A549 (cell line): ENCODE measurements at regions of chr5 and their contacts with region 1.

Region 1: DNA sequence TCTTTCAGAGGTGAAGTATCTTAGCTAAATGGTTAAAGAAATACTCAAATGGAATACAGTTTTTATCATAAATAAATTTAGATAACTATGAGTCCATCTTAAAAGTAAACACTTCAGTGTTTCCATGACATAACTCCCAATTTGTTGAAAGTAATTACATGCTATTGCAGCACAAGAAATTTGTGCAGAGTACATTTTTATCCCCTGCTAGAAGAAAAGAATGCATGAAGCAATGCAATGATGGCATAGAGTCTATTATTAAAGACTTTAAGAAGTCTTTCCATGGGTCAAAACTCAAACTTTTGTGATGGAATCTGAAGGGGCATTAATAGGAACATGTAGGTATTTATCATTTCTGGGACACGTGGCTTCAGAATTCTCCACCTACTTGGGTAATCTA is 106.6 kb upstream of the DPYSL3 start:
- DNase-seq: no peak
- ATAC-seq: no peak
- H3K4me3 ChIP-seq: no peak overlapping the region
- H3K27ac ChIP-seq: no peak overlapping the region
- H3K4me1 ChIP-seq: no peaks in the 10 kb centered on the region
- CTCF ChIP-seq: no peak
- EP300 ChIP-seq: no peak
- POLR2A ChIP-seq: no peak
- RAD21 ChIP-seq: no peak

Region 2: GRCh38 chr5:147628058-147628895 is 11.9 kb after region 1 on chr5:
- CTCF ChIA-PET with region 1: interaction called, 10 read pairs
- POLR2A ChIA-PET with region 1: no interaction called
- DNase-seq: peak; percentile 40 to 61
- ATAC-seq: peak; percentile 88 to 95
- H3K4me3 ChIP-seq: no peak overlapping the region
- H3K27ac ChIP-seq: no peak overlapping the region
- H3K4me1 ChIP-seq: no peaks in the 10 kb centered on the region
- CTCF ChIP-seq: peak; percentile 70
- EP300 ChIP-seq: no peak
- POLR2A ChIP-seq: no peak
- RAD21 ChIP-seq: peak; percentile 74 to 86

Region 3: DNA sequence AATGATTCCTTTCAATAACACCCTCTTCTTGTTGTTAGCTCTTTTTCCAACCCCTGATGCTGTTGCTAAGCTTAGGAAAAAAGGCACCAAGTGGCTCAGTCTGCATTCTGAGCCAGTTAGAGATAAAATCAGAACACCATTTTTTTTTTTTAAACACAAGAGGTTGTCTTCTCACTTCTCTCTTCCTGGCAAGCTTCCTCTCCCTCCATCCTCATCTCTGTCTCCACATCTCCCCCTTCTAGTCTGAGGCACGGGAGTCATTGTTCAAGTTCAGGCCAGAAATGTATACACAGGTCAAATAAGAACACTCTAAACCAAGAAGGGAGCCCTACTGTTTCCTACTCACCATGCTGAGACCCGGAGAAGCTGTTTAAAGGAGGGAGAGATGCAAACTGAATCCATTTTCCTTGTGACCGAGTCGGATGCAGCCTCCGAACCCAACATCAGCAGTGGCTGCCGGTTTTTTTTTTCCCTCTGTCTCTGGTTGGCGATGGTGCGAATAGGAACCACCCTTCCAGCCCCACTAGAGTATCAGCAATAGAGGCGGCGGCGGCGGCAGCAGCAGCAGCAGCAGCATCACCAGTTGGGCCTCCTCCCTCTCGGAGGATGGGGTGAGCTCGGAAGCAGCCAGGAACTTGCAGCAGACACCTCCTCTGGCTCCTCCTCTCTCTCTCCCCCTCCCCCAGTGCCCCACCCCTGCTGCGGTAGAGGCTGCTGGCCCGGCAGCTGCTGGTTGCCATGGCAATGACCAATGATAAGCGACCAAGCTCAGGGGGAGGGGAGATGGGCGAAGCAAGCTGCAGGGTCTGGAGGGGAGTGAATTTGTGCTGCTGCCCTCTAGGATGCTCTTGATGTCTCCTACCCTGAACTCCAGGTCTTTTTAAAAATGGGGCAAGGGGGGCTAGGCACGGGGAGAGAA is 165.9 kb after region 1 on chr5 and contains the start of gene JAKMIP2:
- CTCF ChIA-PET with region 1: no interaction called
- POLR2A ChIA-PET with region 1: no interaction called
- DNase-seq: peak in 1 of 2 experiments; percentile 26
- ATAC-seq: peak in 1 of 2 experiments; percentile 31; a peak in 2 of 6 replicates
- H3K4me3 ChIP-seq: no peak within 1 kb of the TSS
- H3K27ac ChIP-seq: no peak within 1 kb of the TSS
- H3K4me1 ChIP-seq: no peaks in the 10 kb centered on the region
- CTCF ChIP-seq: no peak
- EP300 ChIP-seq: no peak
- POLR2A ChIP-seq: no peak
- RAD21 ChIP-seq: no peak
- polyA plus RNA-seq, gene JAKMIP2: 0.01 TPM in 2 replicates